Activated T-helper 2 cell treated with anti-CD3 and anti-CD28 coated beads, Interferon-gamma antibody, Interleukin-2, Interleukin-4, amounts not matched to agents 10 μg/mL and 5 μg/mL and 100 μg/mL, durations not matched to agents 14 hours and 24 hours and 36 hours (primary cell): ENCODE measurements at regions of chr11 and their contacts with region 1.

Region 1: GRCh38 chr11:67401495-67402191 is at the start of gene PPP1CA:
- DNase-seq: peak; percentile 86
- H3K4me3 Mint-ChIP-seq: peak within 1 kb of the TSS; percentile 97
- H3K27ac Mint-ChIP-seq: peak within 1 kb of the TSS; percentile 83
- H3K4me1 Mint-ChIP-seq: peaks cover 40% of the 10 kb centered on the region
- H3K27me3 Mint-ChIP-seq: no peaks in the 10 kb centered on the region
- total RNA-seq, gene PPP1CA: 250 and 262 TPM in 2 replicates

Region 2: GRCh38 chr11:67345920-67346799 is 55.5 kb before region 1 on chr11:
- intact Hi-C with region 1: no loop called
- DNase-seq: no peak
- H3K4me3 Mint-ChIP-seq: no peak overlapping the region
- H3K27ac Mint-ChIP-seq: peak overlapping the region; percentile 2
- H3K4me1 Mint-ChIP-seq: peaks cover 23% of the 10 kb centered on the region
- H3K27me3 Mint-ChIP-seq: no peaks in the 10 kb centered on the region

Region 3: GRCh38 chr11:67420646-67421420 is 19.2 kb after region 1 on chr11:
- intact Hi-C with region 1: loop called (anchors 2 kb)
- DNase-seq: peak; percentile 94
- H3K4me3 Mint-ChIP-seq: peak overlapping the region; percentile 67
- H3K27ac Mint-ChIP-seq: no peak overlapping the region
- H3K4me1 Mint-ChIP-seq: peaks cover 24% of the 10 kb centered on the region
- H3K27me3 Mint-ChIP-seq: peaks cover 10% of the 10 kb centered on the region

Region 4: DNA sequence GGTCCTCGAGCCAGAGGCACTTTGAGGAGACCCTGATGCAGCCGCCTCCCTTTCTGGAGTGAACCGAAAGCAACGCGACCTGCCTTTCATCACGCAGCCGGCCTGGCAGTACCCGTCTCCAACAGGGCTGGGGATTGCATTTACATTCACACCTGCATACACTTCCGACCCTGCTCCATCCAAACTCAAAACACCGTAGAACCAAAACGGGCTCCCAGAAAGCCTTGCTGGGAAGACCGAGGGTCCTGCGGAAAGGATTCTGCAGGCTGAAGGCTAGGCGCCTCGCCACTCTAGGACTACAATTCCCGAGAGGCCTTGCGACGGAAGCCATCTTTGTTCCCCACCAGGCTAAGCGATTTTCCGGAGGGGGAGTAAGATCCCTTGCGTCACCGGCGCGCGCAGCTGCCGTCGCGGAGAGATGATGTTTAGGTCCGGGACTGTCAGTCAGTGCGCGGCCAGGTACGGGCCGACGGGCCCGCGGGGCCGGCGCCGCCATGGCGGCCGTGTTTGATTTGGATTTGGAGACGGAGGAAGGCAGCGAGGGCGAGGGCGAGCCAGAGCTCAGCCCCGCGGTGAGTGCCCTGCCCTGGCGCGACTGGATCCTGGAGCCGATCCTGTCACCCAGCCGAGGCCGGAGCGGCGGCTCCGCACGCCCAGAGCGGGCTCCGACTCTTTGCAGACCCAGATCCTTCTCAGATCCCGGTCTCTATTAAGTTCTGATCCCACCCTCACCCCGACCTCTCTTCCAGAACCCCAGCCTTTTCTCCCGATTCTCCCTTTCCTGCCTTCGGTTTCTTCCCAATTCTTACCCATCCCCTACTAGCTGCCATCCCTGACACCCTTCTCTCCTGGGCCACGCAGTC is 26.6 kb after region 1 on chr11 and contains the start of gene RPS6KB2:
- intact Hi-C with region 1: loop called (anchors 1 kb)
- DNase-seq: peak; percentile 98
- H3K4me3 Mint-ChIP-seq: peak within 1 kb of the TSS; percentile 98
- H3K27ac Mint-ChIP-seq: peak within 1 kb of the TSS; percentile 93
- H3K4me1 Mint-ChIP-seq: peaks cover 15% of the 10 kb centered on the region
- H3K27me3 Mint-ChIP-seq: no peaks in the 10 kb centered on the region
- total RNA-seq, gene RPS6KB2: 67.6 and 70.2 TPM in 2 replicates

Region 5: GRCh38 chr11:67468835-67469811 is 67.5 kb after region 1 on chr11 and contains the start of gene TMEM134:
- intact Hi-C with region 1: loop called (anchors 2 kb)
- DNase-seq: peak; percentile 86
- H3K4me3 Mint-ChIP-seq: peak within 1 kb of the TSS; percentile 92
- H3K27ac Mint-ChIP-seq: peak within 1 kb of the TSS; percentile 68
- H3K4me1 Mint-ChIP-seq: peaks cover 25% of the 10 kb centered on the region
- H3K27me3 Mint-ChIP-seq: no peaks in the 10 kb centered on the region
- total RNA-seq, gene TMEM134: 58.5 and 62.0 TPM in 2 replicates

Region 6: GRCh38 chr11:67606492-67607201 is 205.0 kb after region 1 on chr11 and contains the start of gene NDUFV1:
- intact Hi-C with region 1: loop called (anchors 2 kb)
- DNase-seq: peak; percentile 95
- H3K4me3 Mint-ChIP-seq: peak within 1 kb of the TSS; percentile 88
- H3K27ac Mint-ChIP-seq: peak within 1 kb of the TSS; percentile 90
- H3K4me1 Mint-ChIP-seq: peaks cover 10% of the 10 kb centered on the region
- H3K27me3 Mint-ChIP-seq: peaks cover 9% of the 10 kb centered on the region
- total RNA-seq, gene NDUFV1: 237 and 242 TPM in 2 replicates